ENCODE measurements at regions of chr1 and their contacts with region 1.

Region 1: DNA sequence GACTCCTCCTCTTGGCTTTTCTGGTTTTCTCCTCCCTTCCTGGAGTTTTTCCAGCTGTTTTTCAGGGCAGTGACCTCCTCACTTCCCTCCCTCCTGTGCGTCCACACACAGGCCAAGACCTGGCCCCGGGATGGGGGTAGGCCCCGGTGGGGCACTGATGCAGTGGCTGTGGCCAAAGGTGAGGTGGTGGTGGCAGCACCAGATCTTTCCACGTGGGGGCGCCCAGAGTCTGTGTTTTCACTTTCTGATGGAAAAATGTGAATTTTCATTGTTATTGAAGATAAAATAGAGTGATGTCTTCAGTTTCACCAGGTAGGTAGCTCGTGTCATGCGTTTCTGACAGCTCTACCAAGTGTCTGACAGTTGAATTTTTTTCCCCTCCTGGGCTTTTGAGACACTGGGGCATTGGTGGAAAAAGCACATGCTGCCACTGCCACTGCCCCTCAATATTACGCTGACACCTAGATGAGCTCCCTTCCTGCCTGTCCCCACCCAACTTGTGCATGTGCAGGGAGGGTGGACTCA is 39.9 kb upstream of the MAGOH start:
- DNase-seq: peak; percentile 73
- ATAC-seq: peak; percentile 90
- H3K4me3 ChIP-seq: no peak overlapping the region
- H3K4me3 Mint-ChIP-seq: no peak overlapping the region
- H3K27ac ChIP-seq: no peak overlapping the region
- H3K27ac Mint-ChIP-seq: no peak overlapping the region
- H3K4me1 ChIP-seq: no peaks in the 10 kb centered on the region
- H3K4me1 Mint-ChIP-seq: no peaks in the 10 kb centered on the region
- H3K27me3 ChIP-seq: no peaks in the 10 kb centered on the region
- H3K27me3 Mint-ChIP-seq: no peaks in the 10 kb centered on the region
- CTCF ChIP-seq: peak; percentile 96

Region 2: DNA sequence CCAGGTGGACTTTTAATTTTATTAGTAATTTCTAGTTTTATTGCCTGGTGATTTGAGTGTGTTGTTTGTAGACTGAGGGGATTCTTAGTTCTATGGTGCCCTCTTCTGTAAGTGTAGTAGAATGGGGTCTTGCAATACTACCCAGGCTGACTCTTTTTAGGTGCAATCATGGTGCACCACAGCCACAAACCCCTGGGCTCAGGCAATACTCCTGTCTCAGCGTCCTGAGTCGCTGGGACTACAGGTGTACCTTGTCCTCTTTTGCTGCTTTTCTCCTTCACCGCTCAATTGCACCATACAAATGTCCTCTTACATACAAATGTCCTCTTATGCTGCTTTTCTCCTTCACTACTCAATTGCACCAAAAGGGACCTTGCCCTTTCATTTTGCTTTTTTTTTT is 308.1 kb before region 1 on chr1:
- CTCF ChIA-PET with region 1: no interaction called
- POLR2A ChIA-PET with region 1: no interaction called
- intact Hi-C with region 1: no loop called
- DNase-seq: peak; percentile 6
- ATAC-seq: no peak
- H3K4me3 ChIP-seq: no peak overlapping the region
- H3K4me3 Mint-ChIP-seq: no peak overlapping the region
- H3K27ac ChIP-seq: no peak overlapping the region
- H3K27ac Mint-ChIP-seq: no peak overlapping the region
- H3K4me1 ChIP-seq: no peaks in the 10 kb centered on the region
- H3K4me1 Mint-ChIP-seq: no peaks in the 10 kb centered on the region
- H3K27me3 ChIP-seq: no peaks in the 10 kb centered on the region
- H3K27me3 Mint-ChIP-seq: no peaks in the 10 kb centered on the region
- CTCF ChIP-seq: no peak

Region 3: GRCh38 chr1:53266106-53266505 is 12.2 kb before region 1 on chr1:
- CTCF ChIA-PET with region 1: interaction called, 17 read pairs
- POLR2A ChIA-PET with region 1: no interaction called
- intact Hi-C with region 1: no loop called
- DNase-seq: no peak
- ATAC-seq: no peak
- H3K4me3 ChIP-seq: no peak overlapping the region
- H3K4me3 Mint-ChIP-seq: no peak overlapping the region
- H3K27ac ChIP-seq: no peak overlapping the region
- H3K27ac Mint-ChIP-seq: no peak overlapping the region
- H3K4me1 ChIP-seq: peaks cover 0 to 10% of the 10 kb centered on the region in 2 donors
- H3K4me1 Mint-ChIP-seq: peaks cover 8% of the 10 kb centered on the region
- H3K27me3 ChIP-seq: no peaks in the 10 kb centered on the region
- H3K27me3 Mint-ChIP-seq: no peaks in the 10 kb centered on the region
- CTCF ChIP-seq: no peak

Region 4: GRCh38 chr1:53316766-53317581 is 38.7 kb after region 1 on chr1:
- CTCF ChIA-PET with region 1: interaction called, 11 read pairs
- POLR2A ChIA-PET with region 1: no interaction called
- intact Hi-C with region 1: no loop called
- DNase-seq: no peak
- ATAC-seq: no peak
- H3K4me3 ChIP-seq: no peak overlapping the region
- H3K4me3 Mint-ChIP-seq: no peak overlapping the region
- H3K27ac ChIP-seq: no peak overlapping the region
- H3K27ac Mint-ChIP-seq: no peak overlapping the region
- H3K4me1 ChIP-seq: peaks cover 4 to 46% of the 10 kb centered on the region in 2 donors
- H3K4me1 Mint-ChIP-seq: peaks cover 35% of the 10 kb centered on the region
- H3K27me3 ChIP-seq: no peaks in the 10 kb centered on the region
- H3K27me3 Mint-ChIP-seq: no peaks in the 10 kb centered on the region
- CTCF ChIP-seq: no peak

Region 5: DNA sequence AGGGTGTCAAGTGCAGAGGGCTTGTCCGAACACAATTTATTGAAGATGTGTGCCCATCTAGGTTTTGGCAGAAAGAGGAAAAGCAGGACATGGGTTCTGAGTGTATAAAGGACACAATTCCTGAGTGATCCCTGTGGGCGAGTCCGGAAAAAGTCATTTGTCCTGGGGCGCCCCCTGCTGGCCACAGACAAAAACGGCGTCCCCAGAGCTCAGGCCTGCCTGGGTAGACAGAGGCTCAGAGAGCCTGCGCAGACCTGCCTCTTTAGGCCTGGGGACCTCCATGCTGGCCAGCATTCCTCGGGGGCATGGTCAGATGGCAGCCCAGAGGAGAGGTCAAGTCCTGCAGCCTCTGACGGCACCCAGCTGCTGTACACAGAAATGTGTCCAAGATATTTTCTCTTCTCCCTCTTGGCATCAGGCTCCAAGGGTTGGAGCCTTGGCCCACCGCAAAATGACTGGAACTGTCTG is 115.1 kb after region 1 on chr1:
- CTCF ChIA-PET with region 1: interaction called, 350 read pairs
- POLR2A ChIA-PET with region 1: no interaction called
- intact Hi-C with region 1: no loop called
- DNase-seq: peak; percentile 75
- ATAC-seq: peak; percentile 72
- H3K4me3 ChIP-seq: no peak overlapping the region
- H3K4me3 Mint-ChIP-seq: no peak overlapping the region
- H3K27ac ChIP-seq: no peak overlapping the region
- H3K27ac Mint-ChIP-seq: no peak overlapping the region
- H3K4me1 ChIP-seq: peaks cover 9 to 13% of the 10 kb centered on the region in 2 donors
- H3K4me1 Mint-ChIP-seq: peaks cover 16% of the 10 kb centered on the region
- H3K27me3 ChIP-seq: no peaks in the 10 kb centered on the region
- H3K27me3 Mint-ChIP-seq: no peaks in the 10 kb centered on the region
- CTCF ChIP-seq: peak; percentile 96

Region 6: GRCh38 chr1:53754484-53755312 is 476.4 kb after region 1 on chr1:
- CTCF ChIA-PET with region 1: interaction called, 5 read pairs
- POLR2A ChIA-PET with region 1: no interaction called
- intact Hi-C with region 1: loop called (anchors 5 kb)
- DNase-seq: peak; percentile 21
- ATAC-seq: no peak
- H3K4me3 ChIP-seq: no peak overlapping the region
- H3K4me3 Mint-ChIP-seq: no peak overlapping the region
- H3K27ac ChIP-seq: no peak overlapping the region
- H3K27ac Mint-ChIP-seq: no peak overlapping the region
- H3K4me1 ChIP-seq: no peaks in the 10 kb centered on the region
- H3K4me1 Mint-ChIP-seq: no peaks in the 10 kb centered on the region
- H3K27me3 ChIP-seq: no peaks in the 10 kb centered on the region
- H3K27me3 Mint-ChIP-seq: no peaks in the 10 kb centered on the region
- CTCF ChIP-seq: peak; percentile 42

Measured in B cell (primary cell).